Heart right ventricle (tissue), 16 donors: ENCODE measurements at regions of chr1 and their contacts with region 1.

Region 1: DNA sequence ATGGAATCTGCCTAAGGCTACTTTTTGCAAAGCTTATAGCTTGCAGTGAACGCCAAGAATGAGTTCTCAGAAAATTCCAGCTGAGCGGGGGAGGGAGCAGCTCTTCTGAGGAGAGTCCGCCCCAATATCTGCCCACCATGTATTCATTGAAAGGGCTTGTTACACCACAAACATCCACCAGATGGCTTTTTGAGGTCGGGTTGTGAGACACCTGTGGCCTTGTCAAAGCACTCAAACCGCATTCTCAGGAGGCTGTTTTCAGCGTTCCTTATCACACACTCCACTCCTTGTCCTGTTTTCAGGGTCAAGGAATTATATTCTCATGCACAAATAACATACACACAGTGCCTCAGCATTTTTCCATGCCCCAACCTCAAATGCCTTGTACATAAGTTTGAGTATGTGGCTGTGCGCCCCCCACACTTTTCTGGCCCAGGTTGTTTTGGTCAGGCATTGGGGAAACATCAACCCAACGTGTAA is 3.9 kb upstream of the C4BPB start:
- DNase-seq: peak in 1 of 2 donors; percentile 53
- ATAC-seq: peak in 7 of 8 donors; percentile 33 to 76 (median 66)
- H3K4me3 ChIP-seq: no peak overlapping the region
- H3K27ac ChIP-seq: no peak overlapping the region
- H3K4me1 ChIP-seq: peaks cover 0 to 13% (median 0%) of the 10 kb centered on the region in 9 donors
- H3K27me3 ChIP-seq: no peaks in the 10 kb centered on the region
- CTCF ChIP-seq: peak; percentile 32 to 73 (median 61)

Region 2: DNA sequence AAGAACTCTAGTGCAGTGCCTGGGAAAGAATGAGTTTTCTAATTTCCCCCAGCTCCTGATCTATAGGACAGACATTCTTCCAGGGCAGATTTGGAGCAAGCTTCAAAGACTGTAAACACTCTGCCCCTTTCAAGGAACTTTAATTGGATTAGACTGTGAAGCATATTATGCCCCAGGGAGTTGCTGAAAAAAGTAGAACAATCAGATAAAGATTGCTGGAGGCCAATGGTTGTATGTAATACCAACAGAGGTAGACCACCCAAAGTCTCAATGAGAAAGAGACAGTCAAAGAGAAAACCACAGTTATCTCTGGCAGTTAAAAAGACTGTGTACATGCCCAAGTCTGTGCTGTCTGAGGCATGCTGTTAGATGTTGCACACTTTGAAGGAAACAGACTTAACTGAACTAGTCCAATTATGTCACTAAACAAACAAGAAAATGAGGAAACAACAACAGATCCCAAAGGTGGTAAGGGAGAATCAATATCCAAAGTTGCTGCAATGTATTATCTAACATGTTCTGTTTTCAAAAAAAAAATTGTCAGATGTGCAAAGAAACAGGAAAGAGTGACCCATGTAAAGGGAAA is 43.7 kb after region 1 on chr1:
- intact Hi-C with region 1: no loop called
- DNase-seq: no peak
- ATAC-seq: no peak
- H3K4me3 ChIP-seq: no peak overlapping the region
- H3K27ac ChIP-seq: no peak overlapping the region
- H3K4me1 ChIP-seq: no peaks in the 10 kb centered on the region
- H3K27me3 ChIP-seq: no peaks in the 10 kb centered on the region
- CTCF ChIP-seq: no peak

Region 3: GRCh38 chr1:207321079-207321789 is 236.5 kb after region 1 on chr1 and contains the start of gene CD55:
- intact Hi-C with region 1: loop called in 3 of 10 experiments (anchors 5 to 10 kb)
- DNase-seq: peak; percentile 93 to 97
- ATAC-seq: peak; percentile 96 to 99 (median 97)
- H3K4me3 ChIP-seq: peak within 1 kb of the TSS; percentile 66 to 98 (median 88)
- H3K27ac ChIP-seq: peak within 1 kb of the TSS; percentile 94 to 99 (median 96)
- H3K4me1 ChIP-seq: peaks cover 0 to 68% (median 28%) of the 10 kb centered on the region in 9 donors
- H3K27me3 ChIP-seq: no peaks in the 10 kb centered on the region
- CTCF ChIP-seq: peak in 5 of 9 donors; percentile 22 to 46 (median 44)
- total RNA-seq, gene CD55: 69.5 to 132 (median 81.4) TPM

Region 4: DNA sequence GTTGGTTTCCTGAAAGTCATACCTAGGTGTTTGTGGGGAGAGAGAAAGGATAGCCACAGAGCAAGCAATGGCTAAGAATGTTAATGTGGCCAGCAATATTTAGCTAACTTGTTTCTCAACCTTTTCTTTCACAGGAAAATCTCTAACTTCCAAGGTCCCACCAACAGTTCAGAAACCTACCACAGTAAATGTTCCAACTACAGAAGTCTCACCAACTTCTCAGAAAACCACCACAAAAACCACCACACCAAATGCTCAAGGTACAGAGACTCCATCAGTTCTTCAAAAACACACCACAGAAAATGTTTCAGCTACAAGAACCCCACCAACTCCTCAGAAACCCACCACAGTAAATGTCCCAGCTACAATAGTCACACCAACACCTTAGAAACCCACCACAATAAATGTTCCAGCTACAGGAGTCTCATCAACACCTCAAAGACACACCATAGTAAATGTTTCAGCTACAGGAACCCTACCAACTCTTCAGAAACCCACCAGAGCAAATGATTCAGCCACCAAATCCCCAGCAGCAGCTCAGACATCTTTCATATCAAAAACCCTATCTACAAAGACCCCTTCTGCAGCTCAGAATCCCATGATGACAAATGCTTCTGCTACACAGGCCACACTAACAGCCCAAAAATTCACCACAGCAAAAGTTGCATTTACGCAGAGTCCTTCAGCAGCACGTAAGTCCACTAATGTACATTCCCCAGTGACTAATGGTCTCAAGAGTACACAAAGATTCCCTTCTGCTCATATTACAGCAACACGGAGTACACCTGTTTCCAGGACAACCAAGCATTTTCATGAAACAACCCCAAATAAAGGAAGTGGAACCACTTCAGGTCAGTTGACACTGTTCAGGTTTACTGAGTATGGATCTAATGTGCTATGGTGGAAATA is 252.1 kb after region 1 on chr1:
- intact Hi-C with region 1: loop called in 1 of 10 experiments (anchors 10 kb)
- DNase-seq: no peak
- ATAC-seq: peak in 2 of 8 donors; percentile 25 to 44
- H3K4me3 ChIP-seq: no peak overlapping the region
- H3K27ac ChIP-seq: peak overlapping the region in 1 of 10 donors; percentile 83
- H3K4me1 ChIP-seq: peaks cover 0 to 39% (median 0%) of the 10 kb centered on the region in 9 donors
- H3K27me3 ChIP-seq: no peaks in the 10 kb centered on the region
- CTCF ChIP-seq: no peak

Region 5: GRCh38 chr1:207397525-207397926 is 312.8 kb after region 1 on chr1:
- intact Hi-C with region 1: loop called in 3 of 10 experiments (anchors 2 to 5 kb)
- DNase-seq: no peak
- ATAC-seq: no peak
- H3K4me3 ChIP-seq: no peak overlapping the region
- H3K27ac ChIP-seq: no peak overlapping the region
- H3K4me1 ChIP-seq: no peaks in the 10 kb centered on the region
- H3K27me3 ChIP-seq: no peaks in the 10 kb centered on the region
- CTCF ChIP-seq: no peak

Region 6: DNA sequence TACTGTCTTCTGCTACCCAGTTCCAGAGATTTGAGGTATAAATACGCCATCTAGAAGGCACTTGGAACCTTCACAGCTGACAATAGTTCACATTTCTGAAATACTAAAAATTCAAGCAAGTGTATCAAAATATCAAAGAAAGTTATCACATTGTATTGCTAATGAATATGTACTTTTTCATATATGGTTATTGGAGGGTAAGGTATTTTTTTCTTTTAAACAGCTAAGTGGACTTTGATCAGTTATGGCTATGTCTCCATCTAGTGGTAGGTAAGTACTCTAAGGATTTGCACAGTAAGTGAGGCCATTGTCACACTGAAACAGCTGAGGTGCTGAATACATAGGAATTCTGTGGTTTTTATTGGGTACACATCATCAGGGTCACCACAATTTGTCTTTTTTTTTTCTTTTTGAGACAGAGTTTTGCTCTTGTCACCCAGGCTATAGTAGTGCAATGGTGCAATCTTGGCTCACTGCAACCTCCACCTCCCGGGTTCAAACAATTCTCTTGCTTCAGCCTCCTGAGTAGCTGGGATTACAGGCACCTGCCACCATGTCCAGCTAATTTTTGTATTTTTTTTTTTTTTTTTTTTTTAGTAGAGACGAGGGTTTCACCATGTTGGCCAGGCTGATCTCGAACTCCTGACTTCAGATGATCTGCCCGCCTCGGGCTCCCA is 320.2 kb after region 1 on chr1:
- intact Hi-C with region 1: loop called in 9 of 10 experiments (anchors 2 to 5 kb)
- DNase-seq: no peak
- ATAC-seq: peak in 7 of 8 donors; percentile 52 to 81 (median 62)
- H3K4me3 ChIP-seq: no peak overlapping the region
- H3K27ac ChIP-seq: no peak overlapping the region
- H3K4me1 ChIP-seq: peaks cover 0 to 21% (median 0%) of the 10 kb centered on the region in 9 donors
- H3K27me3 ChIP-seq: peaks cover 0 to 9% (median 0%) of the 10 kb centered on the region in 7 donors
- CTCF ChIP-seq: peak; percentile 46 to 91 (median 86)

Region 7: DNA sequence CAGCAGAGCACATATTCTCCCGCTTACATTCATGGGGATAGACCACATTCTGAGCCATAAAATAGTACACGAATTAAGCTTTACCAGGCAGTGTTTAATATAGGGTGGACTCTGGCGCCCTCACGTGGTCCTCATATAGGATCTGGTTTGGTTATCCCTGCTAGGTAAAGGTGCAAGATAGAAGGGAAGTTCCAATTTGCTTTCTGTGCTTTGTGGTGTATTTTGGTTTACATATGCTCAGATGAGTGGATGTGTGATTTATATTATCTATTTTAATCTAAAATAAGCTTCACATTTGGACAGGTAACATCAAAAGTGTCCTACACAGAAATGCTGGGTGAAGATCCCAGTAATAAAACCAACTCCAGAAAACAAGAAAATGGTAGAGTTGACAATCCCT is 414.8 kb after region 1 on chr1:
- intact Hi-C with region 1: loop called in 8 of 10 experiments (anchors 2 to 5 kb)
- DNase-seq: peak; percentile 24 to 45
- ATAC-seq: peak in 7 of 8 donors; percentile 46 to 77 (median 67)
- H3K4me3 ChIP-seq: no peak overlapping the region
- H3K27ac ChIP-seq: no peak overlapping the region
- H3K4me1 ChIP-seq: peaks cover 0 to 27% (median 8%) of the 10 kb centered on the region in 9 donors
- H3K27me3 ChIP-seq: peaks cover 0 to 96% (median 84%) of the 10 kb centered on the region in 7 donors
- CTCF ChIP-seq: peak; percentile 14 to 79 (median 68)